Left lung (tissue), 14 donors: ENCODE measurements at regions of chr12 and their contacts with region 1.

Region 1: DNA sequence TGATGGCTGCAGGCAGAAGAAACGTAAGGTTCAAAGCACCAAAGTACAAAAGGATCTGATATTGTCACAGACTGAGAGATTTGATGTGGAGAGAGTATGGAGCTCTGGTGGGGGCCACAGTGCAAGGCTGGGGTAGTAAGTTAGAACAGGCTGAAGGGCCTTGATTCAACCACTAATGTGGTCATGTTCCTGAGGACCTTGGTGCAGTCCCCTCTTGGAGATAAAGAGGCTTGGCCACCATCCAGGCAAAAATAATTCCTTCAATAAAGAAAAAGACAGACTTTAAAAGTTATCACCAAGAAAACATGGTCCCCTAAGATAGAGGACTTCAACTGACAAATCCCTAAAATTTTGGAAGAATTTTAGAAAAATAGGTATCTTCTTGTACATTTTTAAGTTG is 17.4 kb downstream of the CAPZA3 start:
- DNase-seq: no peak
- ATAC-seq: no peak
- H3K4me3 ChIP-seq: no peak overlapping the region
- H3K27ac ChIP-seq: no peak overlapping the region
- H3K4me1 ChIP-seq: no peaks in the 10 kb centered on the region
- H3K27me3 ChIP-seq: no peaks in the 10 kb centered on the region
- CTCF ChIP-seq: no peak

Region 2: DNA sequence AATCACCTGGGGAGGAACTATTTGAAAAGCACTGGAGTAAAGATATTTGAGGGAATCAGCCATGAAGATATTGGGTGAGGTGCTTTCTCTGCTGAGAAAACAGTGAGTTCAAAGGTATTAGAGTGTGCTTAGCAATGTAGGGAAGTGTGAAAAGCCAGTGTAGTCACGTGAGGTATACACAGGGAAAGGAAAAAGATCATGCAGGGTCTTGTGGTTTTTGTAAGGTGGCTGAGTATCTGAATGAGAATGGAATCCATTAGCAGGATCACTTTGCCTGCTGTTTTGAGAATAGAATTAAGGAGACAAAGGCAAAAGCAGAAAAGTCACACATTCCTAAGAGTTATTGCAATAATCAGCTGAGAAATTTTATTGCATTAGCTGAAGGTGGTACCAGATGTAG is 301.0 kb before region 1 on chr12:
- intact Hi-C with region 1: loop called in 1 of 2 experiments (anchors 10 kb)
- DNase-seq: no peak
- ATAC-seq: no peak
- H3K4me3 ChIP-seq: no peak overlapping the region
- H3K27ac ChIP-seq: no peak overlapping the region
- H3K4me1 ChIP-seq: no peaks in the 10 kb centered on the region
- H3K27me3 ChIP-seq: no peaks in the 10 kb centered on the region
- CTCF ChIP-seq: no peak

Region 3: DNA sequence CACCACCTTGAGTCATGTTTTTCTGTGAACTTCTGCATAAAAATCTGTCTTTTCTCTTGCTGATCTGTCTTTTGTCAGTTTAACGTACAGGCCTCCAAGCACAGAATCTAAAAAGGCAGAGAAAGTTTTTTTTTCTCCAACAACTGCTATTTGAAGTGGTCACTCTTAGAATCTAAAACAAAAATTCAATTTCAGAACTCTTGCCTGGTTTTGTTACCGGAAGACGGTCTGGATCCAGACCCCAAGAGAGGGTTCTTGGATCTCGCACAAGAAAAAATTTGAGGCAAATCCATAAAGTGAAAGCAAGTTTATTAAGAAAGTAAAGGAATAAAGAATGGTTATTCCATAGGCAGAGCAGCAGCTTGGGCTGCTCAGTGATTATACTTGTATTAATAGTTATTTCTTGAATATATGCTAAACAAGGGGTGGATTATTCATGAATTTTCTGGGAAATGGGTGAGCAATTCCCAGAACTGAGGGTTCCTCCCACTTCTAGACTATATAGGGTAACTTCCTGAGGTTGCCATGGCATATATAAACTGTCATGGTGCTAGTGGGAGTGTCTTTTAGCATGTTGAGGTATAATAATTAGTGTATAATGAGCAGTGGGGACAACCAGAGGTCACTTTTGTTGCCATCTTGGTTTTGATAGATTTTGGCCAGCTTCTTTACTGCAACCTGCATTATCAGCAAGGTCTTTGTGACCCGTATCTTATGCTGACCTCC is 224.2 kb after region 1 on chr12:
- intact Hi-C with region 1: no loop called
- DNase-seq: no peak
- ATAC-seq: no peak
- H3K4me3 ChIP-seq: no peak overlapping the region
- H3K27ac ChIP-seq: no peak overlapping the region
- H3K4me1 ChIP-seq: no peaks in the 10 kb centered on the region
- H3K27me3 ChIP-seq: no peaks in the 10 kb centered on the region
- CTCF ChIP-seq: no peak